Testis (tissue), 5 donors: ENCODE measurements at regions of chr3 and their contacts with region 1.

Region 1: GRCh38 chr3:89340408-89340807 is 233.0 kb downstream of the EPHA3 start:
- DNase-seq: no peak
- H3K4me3 ChIP-seq: no peak overlapping the region
- H3K27ac ChIP-seq: no peak overlapping the region
- H3K4me1 ChIP-seq: no peaks in the 10 kb centered on the region
- H3K27me3 ChIP-seq: no peaks in the 10 kb centered on the region
- CTCF ChIP-seq: no peak
- POLR2A ChIP-seq: no peak

Region 2: GRCh38 chr3:89392991-89393390 is 52.6 kb after region 1 on chr3:
- intact Hi-C with region 1: loop called (anchors 2 kb)
- DNase-seq: no peak
- H3K4me3 ChIP-seq: no peak overlapping the region
- H3K27ac ChIP-seq: no peak overlapping the region
- H3K4me1 ChIP-seq: no peaks in the 10 kb centered on the region
- H3K27me3 ChIP-seq: no peaks in the 10 kb centered on the region
- CTCF ChIP-seq: no peak
- POLR2A ChIP-seq: no peak